Adrenal gland (tissue), 19 donors: ENCODE measurements at regions of chr14 and their contacts with region 1.

Region 1: GRCh38 chr14:90301668-90302090 is 30.1 kb downstream of the NRDE2 start:
- DNase-seq: no peak
- H3K4me3 ChIP-seq: no peak overlapping the region
- H3K27ac ChIP-seq: peak overlapping the region in 2 of 5 donors; percentile 18 to 40
- H3K4me1 ChIP-seq: peaks cover 7 to 20% of the 10 kb centered on the region in 2 donors
- H3K27me3 ChIP-seq: no peaks in the 10 kb centered on the region
- CTCF ChIP-seq: peak; percentile 21 to 64 (median 47)
- POLR2A ChIP-seq: no peak

Region 2: DNA sequence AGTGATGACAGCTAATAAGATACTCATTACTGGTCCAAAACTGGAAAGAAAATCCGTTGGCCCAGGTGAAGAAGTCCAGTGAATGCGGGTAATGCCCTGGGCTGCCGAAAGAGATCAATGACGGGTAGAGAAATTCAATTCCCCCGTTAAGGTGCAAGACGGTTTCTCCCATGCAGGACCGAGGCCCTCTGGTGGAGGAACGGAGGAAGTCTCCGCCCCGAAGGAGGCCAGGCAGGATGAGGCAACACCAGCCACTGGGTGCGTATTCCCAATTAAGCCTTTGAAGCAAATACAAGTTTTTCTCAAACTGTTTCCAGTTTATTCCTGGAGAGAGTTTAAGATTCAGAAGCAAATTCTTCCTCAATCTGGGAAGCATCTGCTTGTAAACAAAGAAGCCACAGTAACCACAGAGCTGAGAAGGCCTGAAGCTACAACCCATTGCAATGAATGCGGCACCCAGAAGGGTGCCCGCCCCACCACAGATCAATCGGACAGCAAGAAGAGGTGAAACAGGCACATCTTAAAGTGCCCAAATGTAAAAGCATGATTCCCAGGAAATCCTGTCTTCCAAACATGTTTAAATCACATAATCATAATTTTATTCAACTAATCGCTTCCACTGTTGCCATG is 396.0 kb after region 1 on chr14:
- intact Hi-C with region 1: loop called in 1 of 2 experiments (anchors 10 kb)
- DNase-seq: peak; percentile 82 to 95 (median 86)
- H3K4me3 ChIP-seq: no peak overlapping the region
- H3K27ac ChIP-seq: peak overlapping the region in 1 of 5 donors; percentile 64
- H3K4me1 ChIP-seq: peaks cover 3 to 17% of the 10 kb centered on the region in 2 donors
- H3K27me3 ChIP-seq: no peaks in the 10 kb centered on the region
- CTCF ChIP-seq: peak; percentile 93 to 98 (median 96)
- POLR2A ChIP-seq: no peak

Region 3: DNA sequence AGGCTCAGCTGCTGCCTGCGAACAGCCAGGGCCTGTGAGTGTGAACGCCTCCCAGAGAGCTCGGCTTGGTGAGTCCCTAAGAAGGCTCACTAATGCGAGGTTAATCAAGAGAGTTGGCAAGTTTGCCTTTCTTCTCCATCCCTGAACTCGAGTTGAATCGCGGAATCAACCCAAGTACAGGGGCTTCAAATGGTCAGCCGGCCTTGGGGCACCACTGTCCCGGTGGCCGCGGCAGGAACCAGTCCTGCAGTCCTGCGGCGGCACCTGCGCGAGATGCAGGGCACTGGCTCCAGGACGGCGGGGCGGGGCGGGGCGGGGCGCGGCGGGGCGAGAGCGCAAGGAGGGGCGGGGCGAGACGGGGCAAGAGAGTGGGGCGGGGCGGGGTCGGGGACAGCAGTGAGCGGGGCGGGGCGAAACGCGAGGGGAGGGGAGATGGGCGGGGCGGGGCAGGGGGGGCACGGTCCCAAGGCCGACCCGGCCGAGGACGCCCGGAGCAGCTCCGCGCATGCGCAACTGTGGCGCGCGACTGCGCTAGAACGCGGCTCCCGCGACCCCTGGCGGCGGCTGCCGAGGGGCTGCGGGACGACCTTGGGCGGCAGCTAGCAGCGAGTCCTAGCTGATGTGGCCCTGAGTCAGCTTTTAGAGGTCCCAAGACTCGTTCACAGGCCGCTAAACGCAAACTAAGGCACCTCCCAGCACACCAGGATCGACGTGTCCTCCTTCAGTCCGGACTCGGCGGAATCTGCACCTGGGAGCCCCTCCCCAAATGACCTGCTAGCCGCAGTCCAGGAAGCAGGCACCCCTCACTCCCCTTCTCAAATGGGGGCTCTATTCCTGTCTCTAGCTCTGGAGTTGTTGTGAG is 456.6 kb after region 1 on chr14:
- intact Hi-C with region 1: loop called in 1 of 2 experiments (anchors 10 kb)
- DNase-seq: peak; percentile 89 to 94 (median 93)
- H3K4me3 ChIP-seq: peak overlapping the region in 2 of 4 donors; percentile 22 to 66
- H3K27ac ChIP-seq: peak overlapping the region in 4 of 5 donors; percentile 26 to 90 (median 80)
- H3K4me1 ChIP-seq: peaks cover 9 to 13% of the 10 kb centered on the region in 2 donors
- H3K27me3 ChIP-seq: no peaks in the 10 kb centered on the region
- CTCF ChIP-seq: peak; percentile 57 to 95 (median 83)
- POLR2A ChIP-seq: peak; percentile 49 to 55